CD4-positive, alpha-beta memory T cell (primary cell): ENCODE measurements at regions of chr17 and their contacts with region 1.

Region 1: DNA sequence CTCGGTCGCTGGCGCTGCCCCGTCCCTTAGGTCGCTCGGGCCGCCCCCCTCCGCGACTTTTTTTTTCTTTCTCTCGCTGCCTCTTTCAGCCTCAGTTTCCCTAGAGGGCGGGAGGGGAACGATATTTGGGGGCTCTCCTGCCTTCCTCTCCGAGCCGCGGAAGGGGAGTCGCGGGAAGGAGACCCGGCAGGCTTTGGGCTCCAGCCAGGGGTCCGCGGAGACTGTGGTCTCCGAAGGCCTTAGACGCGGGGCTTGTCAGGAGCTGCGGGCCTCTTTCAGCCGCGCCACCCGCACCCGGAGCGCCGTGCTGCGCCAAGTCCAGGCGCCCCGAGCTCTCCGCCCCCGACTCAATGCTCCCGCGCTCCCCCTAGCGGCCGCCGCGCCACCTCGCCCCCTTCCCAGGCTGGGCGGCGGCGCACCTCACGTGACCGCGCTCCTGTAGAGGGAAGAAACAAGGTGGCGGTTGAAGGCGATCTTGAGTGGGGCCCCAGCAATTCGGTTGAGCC is at the start of gene LRRC37B:
- DNase-seq: peak; percentile 84 to 91 (median 85)
- H3K4me3 ChIP-seq: peak within 1 kb of the TSS; percentile 44 to 90
- H3K4me3 Mint-ChIP-seq: peak within 1 kb of the TSS; percentile 88 to 98 (median 94)
- H3K27ac ChIP-seq: peak within 1 kb of the TSS; percentile 74
- H3K27ac Mint-ChIP-seq: peak within 1 kb of the TSS; percentile 90 to 97 (median 93)
- H3K4me1 ChIP-seq: peaks cover 41% of the 10 kb centered on the region
- H3K4me1 Mint-ChIP-seq: peaks cover 18 to 41% (median 36%) of the 10 kb centered on the region in 4 donors
- H3K27me3 ChIP-seq: no peaks in the 10 kb centered on the region
- H3K27me3 Mint-ChIP-seq: no peaks in the 10 kb centered on the region
- total RNA-seq, gene LRRC37B: 58.0 to 68.5 TPM

Region 2: GRCh38 chr17:31935512-31935911 is 71.5 kb before region 1 on chr17:
- CTCF ChIA-PET with region 1: interaction called, 3 read pairs
- POLR2A ChIA-PET with region 1: interaction called, 4 read pairs
- intact Hi-C with region 1: loop called (anchors 5 kb)
- DNase-seq: no peak
- H3K4me3 ChIP-seq: no peak overlapping the region
- H3K4me3 Mint-ChIP-seq: peak overlapping the region in 7 of 8 donors; percentile 8 to 94 (median 90)
- H3K27ac ChIP-seq: no peak overlapping the region
- H3K27ac Mint-ChIP-seq: peak overlapping the region in 2 of 7 donors; percentile 9 to 84
- H3K4me1 ChIP-seq: peaks cover 19% of the 10 kb centered on the region
- H3K4me1 Mint-ChIP-seq: peaks cover 8 to 24% (median 18%) of the 10 kb centered on the region in 4 donors
- H3K27me3 ChIP-seq: no peaks in the 10 kb centered on the region
- H3K27me3 Mint-ChIP-seq: no peaks in the 10 kb centered on the region

Region 3: GRCh38 chr17:32136856-32137255 is 129.8 kb after region 1 on chr17:
- CTCF ChIA-PET with region 1: interaction called, 50 read pairs
- POLR2A ChIA-PET with region 1: interaction called, 33 read pairs
- intact Hi-C with region 1: loop called (anchors 2 kb)
- DNase-seq: peak in 1 of 5 donors; percentile 18
- H3K4me3 ChIP-seq: no peak overlapping the region
- H3K4me3 Mint-ChIP-seq: no peak overlapping the region
- H3K27ac ChIP-seq: no peak overlapping the region
- H3K27ac Mint-ChIP-seq: peak overlapping the region in 2 of 7 donors; percentile 41 to 64
- H3K4me1 ChIP-seq: peaks cover 13% of the 10 kb centered on the region
- H3K4me1 Mint-ChIP-seq: peaks cover 11 to 29% (median 20%) of the 10 kb centered on the region in 4 donors
- H3K27me3 ChIP-seq: no peaks in the 10 kb centered on the region
- H3K27me3 Mint-ChIP-seq: no peaks in the 10 kb centered on the region

Region 4: DNA sequence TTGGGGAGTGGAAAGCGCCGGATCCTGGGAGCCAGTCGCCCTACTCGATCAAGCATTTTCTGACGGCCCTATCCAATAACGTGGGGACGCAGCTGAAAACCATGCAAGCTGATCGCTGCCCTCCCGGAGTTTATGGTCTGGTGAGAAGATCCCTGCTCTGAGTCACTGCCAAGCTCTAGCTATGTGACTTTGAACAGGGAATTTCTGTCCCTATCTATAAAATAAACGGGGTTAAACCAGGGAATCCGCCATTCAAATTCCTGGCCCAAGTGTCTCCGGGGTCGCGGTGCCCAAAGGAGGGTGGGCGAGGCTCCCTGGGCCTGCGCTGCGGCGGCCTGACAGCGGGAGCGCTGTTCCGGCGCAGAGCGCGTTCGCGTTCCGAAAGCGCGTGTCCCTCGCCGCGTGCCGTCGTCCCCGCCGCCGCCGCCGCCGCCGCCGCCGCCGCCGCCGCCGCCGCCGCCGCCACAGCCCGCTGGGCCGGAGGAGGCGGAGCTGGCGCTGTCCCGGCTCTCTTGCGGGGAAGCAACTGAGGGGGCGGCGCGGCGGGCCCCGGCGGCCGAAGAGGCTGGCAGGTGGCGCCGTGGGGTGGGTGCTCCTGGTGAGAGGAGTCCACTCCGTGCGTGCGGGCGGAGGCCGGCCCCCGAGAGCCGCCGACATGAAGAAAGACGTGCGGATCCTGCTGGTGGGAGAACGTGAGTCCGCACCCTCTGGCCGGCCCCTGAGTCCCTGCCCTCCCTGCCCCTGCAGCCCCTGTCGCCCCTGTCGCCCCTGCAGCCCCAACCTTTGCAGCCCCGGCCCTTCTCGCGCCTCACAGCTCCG is 135.2 kb after region 1 on chr17 and contains the start of gene RHOT1:
- CTCF ChIA-PET with region 1: interaction called, 50 read pairs
- POLR2A ChIA-PET with region 1: interaction called, 33 read pairs
- intact Hi-C with region 1: loop called (anchors 2 kb)
- DNase-seq: peak; percentile 65 to 79 (median 75)
- H3K4me3 ChIP-seq: peak within 1 kb of the TSS; percentile 81 to 88
- H3K4me3 Mint-ChIP-seq: peak within 1 kb of the TSS; percentile 92 to 98 (median 96)
- H3K27ac ChIP-seq: peak within 1 kb of the TSS; percentile 63
- H3K27ac Mint-ChIP-seq: peak within 1 kb of the TSS; percentile 74 to 98 (median 90)
- H3K4me1 ChIP-seq: peaks cover 41% of the 10 kb centered on the region
- H3K4me1 Mint-ChIP-seq: peaks cover 21 to 49% (median 34%) of the 10 kb centered on the region in 4 donors
- H3K27me3 ChIP-seq: no peaks in the 10 kb centered on the region
- H3K27me3 Mint-ChIP-seq: no peaks in the 10 kb centered on the region
- total RNA-seq, gene RHOT1: 26.9 to 28.9 TPM